Endothelial cell of umbilical vein (primary cell): ENCODE measurements at regions of chr3 and their contacts with region 1.

Region 1: GRCh38 chr3:32391643-32392535 is at the start of gene CMTM7:
- DNase-seq: peak; percentile 65
- H3K4me3 ChIP-seq: peak within 1 kb of the TSS; percentile 67 to 94 (median 82)
- H3K27ac ChIP-seq: peak within 1 kb of the TSS; percentile 77
- H3K4me1 ChIP-seq: peaks cover 14% of the 10 kb centered on the region
- H3K27me3 ChIP-seq: no peaks in the 10 kb centered on the region
- CTCF ChIP-seq: no peak
- POLR2A ChIP-seq: peak; percentile 93
- total RNA-seq, gene CMTM7: 44.7 and 47.1 TPM in 2 replicates

Region 2: GRCh38 chr3:32374788-32375595 is 16.9 kb before region 1 on chr3:
- CTCF ChIA-PET with region 1: interaction called, 42 read pairs
- POLR2A ChIA-PET with region 1: no interaction called
- dilution Hi-C with region 1: no loop called
- intact Hi-C with region 1: loop called (anchors 1 kb)
- DNase-seq: peak; percentile 80
- H3K4me3 ChIP-seq: no peak overlapping the region
- H3K27ac ChIP-seq: no peak overlapping the region
- H3K4me1 ChIP-seq: peaks cover 9% of the 10 kb centered on the region
- H3K27me3 ChIP-seq: no peaks in the 10 kb centered on the region
- CTCF ChIP-seq: peak; percentile 41 to 48
- POLR2A ChIP-seq: no peak

Region 3: DNA sequence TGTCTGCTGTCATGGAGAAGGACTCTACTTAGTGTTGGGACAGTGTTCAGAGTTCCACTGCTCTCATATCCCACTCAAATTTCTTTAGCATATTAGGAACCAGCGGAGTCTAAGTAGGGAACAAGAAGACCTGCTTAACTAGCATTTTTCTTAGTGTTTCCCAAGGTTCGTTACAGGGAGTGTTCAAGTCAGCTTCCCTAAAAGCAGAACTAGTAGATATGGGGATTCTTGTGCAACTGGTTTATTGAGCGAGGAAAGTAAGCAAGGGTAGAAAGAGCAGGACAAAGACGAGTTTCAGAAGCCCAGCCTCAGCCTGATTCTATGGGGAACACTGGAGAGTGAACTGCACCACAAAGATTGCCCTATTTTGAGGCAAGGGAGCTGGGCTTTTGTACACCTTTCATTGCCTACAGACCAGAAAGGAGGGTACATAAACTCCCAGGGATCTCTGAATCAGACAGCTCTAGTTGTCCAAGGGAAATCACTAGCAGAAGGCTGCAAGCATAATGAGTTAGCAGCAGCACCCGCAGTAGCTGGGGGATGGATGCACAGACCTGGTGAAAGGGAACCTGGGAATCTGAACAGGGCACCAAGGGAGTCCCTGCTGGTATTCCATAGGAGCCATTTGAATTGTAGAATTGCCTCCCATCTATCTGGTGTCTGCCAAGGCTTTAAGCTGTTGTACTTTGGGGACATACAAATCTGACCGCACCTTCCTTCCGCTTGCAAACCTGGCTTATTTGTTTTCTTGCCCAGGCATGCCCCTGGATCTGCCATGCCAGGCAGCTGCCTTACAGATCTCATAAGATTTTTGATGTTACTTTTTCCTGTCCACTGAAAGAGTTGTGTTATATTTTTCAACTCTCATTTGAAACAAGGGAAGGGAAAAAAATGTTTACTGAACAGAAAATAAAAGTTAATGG is 14.9 kb after region 1 on chr3:
- CTCF ChIA-PET with region 1: no interaction called
- POLR2A ChIA-PET with region 1: no interaction called
- dilution Hi-C with region 1: no loop called
- intact Hi-C with region 1: no loop called
- DNase-seq: no peak
- H3K4me3 ChIP-seq: no peak overlapping the region
- H3K27ac ChIP-seq: no peak overlapping the region
- H3K4me1 ChIP-seq: peaks cover 19% of the 10 kb centered on the region
- H3K27me3 ChIP-seq: no peaks in the 10 kb centered on the region
- CTCF ChIP-seq: no peak
- POLR2A ChIP-seq: no peak

Region 4: DNA sequence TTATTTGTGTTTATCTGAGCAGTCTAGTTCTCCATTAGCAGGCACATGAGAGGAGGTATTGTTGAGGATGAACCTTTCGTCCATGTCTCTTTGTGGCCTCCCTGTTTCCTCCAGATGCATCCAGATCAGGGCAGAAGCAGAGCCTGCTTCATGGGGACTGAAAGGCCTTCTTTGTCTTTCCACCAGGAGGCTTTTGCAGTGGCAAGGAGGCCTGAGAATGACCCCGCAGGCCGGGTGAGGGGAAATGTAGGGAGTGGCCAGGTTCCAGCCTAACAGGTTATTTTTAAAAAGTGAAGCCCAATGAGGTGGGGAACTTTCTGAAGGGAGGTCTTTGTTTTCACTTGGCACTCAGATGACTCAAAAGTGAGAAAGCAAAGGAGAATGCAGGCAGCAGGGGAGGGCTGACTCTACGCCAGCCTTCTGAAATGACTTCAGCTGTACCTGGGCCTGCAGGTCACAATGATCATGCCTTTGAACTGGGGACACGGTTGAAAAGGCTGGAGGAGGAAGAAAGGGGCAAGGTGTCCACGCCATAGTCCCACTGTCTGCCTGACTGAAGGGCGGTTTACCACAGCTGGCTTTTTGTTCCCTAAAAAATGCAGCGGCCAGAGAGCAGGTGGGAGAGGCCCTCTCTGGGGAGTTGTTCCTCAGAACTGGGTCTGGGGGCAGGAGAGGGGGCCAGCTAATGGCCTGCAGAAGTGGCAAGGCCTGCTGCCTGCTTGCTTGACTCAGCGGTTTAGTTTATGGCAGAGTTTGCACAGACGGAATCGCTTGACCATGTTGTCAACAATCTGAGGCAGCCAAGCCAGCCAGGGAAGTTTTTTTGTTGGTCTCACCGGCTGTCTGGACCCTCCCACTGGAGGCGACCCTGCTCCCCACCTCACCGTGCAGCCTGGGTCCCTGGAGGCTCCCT is 28.5 kb after region 1 on chr3:
- CTCF ChIA-PET with region 1: interaction called, 4 read pairs
- POLR2A ChIA-PET with region 1: no interaction called
- dilution Hi-C with region 1: no loop called
- intact Hi-C with region 1: loop called (anchors 1 kb)
- DNase-seq: peak; percentile 85
- H3K4me3 ChIP-seq: no peak overlapping the region
- H3K27ac ChIP-seq: peak overlapping the region; percentile 92
- H3K4me1 ChIP-seq: peaks cover 57% of the 10 kb centered on the region
- H3K27me3 ChIP-seq: no peaks in the 10 kb centered on the region
- CTCF ChIP-seq: peak; percentile 22 to 25
- POLR2A ChIP-seq: peak; percentile 11